Gastrocnemius medialis (tissue), 4 donors: ENCODE measurements at regions of chr6 and their contacts with region 1.

Region 1: DNA sequence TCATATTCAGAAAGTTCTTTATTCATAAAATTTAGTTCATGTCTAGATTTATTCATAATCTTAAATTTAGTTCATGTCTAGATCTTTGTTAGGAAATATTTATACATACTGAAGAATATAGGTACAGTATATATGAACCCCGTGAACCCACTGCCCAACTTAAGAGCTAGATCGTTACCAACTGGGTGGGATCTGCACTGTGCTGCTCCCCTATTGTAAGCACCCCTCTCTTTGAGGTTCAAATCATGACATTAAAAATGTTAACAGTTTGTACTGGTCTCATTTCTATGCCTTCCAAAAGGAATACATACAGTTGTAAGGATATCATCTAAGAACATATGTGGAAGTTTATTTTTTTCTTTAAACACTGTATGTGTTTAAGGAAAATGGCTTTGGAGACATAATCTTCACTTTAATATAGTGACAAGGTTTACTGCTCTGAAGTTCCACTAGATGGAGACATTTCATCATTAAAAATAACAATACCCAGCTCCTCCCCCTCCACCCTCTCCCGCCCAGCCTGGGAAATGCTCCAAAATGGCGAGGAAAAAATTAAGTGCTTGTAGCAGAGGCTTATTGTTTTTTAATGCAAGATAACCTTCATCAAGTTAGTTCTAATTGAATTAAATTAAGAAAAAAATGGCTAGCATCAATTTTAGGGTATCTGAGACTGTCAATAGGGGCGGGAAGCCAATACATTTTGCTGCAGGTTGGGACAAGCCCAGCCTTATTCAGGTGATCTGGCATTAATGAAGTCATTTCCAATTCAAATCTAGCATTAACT is 104.1 kb upstream of the TRAF3IP2 start:
- DNase-seq: peak; percentile 52 to 67
- ATAC-seq: peak; percentile 84 to 90
- H3K4me3 ChIP-seq: peak overlapping the region; percentile 30 to 48 (median 41)
- H3K27ac ChIP-seq: peak overlapping the region in 3 of 4 donors; percentile 57 to 67 (median 60)
- H3K4me1 ChIP-seq: peaks cover 28 to 31% of the 10 kb centered on the region in 2 donors
- H3K27me3 ChIP-seq: no peaks in the 10 kb centered on the region
- CTCF ChIP-seq: peak; percentile 73 to 83 (median 80)
- POLR2A ChIP-seq: no peak

Region 2: DNA sequence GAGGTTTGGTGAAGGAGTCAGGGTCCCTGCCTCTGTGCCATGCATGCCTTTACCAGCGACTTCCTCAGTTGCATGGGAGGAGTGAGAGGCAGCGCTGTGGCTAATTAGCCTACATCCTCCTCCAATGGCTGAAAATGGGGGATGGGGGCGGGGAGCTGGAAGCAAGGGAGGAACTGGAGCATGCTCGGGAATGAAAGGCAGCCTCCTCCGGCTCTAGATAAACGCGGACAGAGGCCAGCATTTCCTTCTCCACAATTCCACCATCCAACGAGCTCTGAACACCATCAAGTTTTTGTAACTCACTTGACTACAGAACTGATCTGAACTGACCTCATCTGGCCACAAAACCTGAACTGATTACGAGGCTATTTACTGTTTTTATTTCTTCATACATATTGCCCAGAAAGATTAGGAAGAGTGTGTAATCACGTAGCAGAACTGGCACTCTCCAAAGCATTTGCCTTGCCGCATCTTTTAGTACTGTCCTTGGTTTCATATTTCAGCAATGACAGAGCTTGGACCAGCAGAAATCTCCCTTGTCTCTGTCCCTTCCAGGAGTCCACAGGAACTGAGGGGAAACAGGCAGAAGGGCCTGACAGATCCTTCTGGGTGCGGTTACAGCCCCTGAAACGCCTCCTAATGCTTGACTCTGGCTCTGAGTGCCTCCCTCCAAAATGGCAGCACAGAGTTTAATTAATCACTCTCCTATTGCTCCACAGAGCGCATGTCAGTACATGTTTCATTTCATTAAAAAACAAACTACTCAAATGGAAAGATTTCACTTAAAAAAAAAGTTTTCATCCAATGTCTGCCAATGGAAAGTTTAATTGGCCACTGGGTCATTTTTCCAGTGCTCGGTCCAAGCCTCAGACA is 45.9 kb before region 1 on chr6:
- in situ Hi-C with region 1: no loop called
- intact Hi-C with region 1: no loop called
- DNase-seq: peak; percentile 56 to 77
- ATAC-seq: peak; percentile 63 to 64
- H3K4me3 ChIP-seq: peak overlapping the region; percentile 12 to 52 (median 22)
- H3K27ac ChIP-seq: peak overlapping the region; percentile 88 to 96 (median 95)
- H3K4me1 ChIP-seq: peaks cover 78 to 83% of the 10 kb centered on the region in 2 donors
- H3K27me3 ChIP-seq: no peaks in the 10 kb centered on the region
- CTCF ChIP-seq: peak in 1 of 5 experiments; percentile 6
- POLR2A ChIP-seq: peak; percentile 11 to 59

Region 3: DNA sequence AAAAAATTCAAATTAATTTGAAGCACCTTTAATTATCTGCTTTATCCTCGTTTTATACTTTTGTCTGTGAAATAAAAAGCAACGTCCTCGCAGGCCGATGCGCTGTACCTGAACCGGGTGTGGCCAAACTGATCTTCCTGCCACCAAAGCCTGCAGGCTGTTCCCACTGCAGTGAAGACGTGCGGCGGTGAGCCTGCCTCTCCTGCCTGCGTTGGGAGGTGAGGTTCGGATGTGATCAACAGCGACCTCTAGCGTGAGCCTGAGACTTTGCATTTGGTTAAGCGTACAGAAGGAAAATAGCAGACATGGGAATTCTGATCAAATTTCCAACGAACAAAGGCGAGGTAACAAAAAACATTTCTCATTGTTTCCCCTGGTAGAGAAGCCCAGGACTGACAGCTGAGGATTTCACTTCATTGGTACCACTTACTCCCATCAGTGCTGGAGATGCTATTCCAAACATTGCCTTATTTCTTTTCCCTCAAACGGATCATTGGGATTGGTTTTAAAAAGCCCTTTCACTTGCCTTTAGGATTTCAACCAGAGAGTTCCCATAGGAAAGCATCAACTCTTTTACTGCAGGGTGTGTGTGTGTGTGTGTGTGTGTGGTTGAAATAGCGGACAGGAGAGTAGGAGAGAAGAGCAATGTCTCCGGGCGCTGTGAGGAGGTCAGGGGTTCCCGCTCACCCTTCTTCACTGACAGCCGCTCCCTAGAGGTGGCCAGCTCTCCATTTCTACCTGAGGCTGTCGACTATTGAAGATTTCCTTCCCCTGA is 287.5 kb after region 1 on chr6:
- in situ Hi-C with region 1: loop called (anchors 5 kb)
- intact Hi-C with region 1: loop called (anchors 1 kb)
- DNase-seq: peak; percentile 76 to 79
- ATAC-seq: peak; percentile 70 to 92
- H3K4me3 ChIP-seq: peak overlapping the region; percentile 8 to 39 (median 34)
- H3K27ac ChIP-seq: peak overlapping the region; percentile 21 to 64 (median 54)
- H3K4me1 ChIP-seq: peaks cover 0 to 8% of the 10 kb centered on the region in 2 donors
- H3K27me3 ChIP-seq: no peaks in the 10 kb centered on the region
- CTCF ChIP-seq: peak; percentile 84 to 93 (median 89)
- POLR2A ChIP-seq: no peak

Region 4: GRCh38 chr6:112043032-112044007 is 333.5 kb after region 1 on chr6:
- in situ Hi-C with region 1: loop called in 2 of 4 experiments (anchors 5 to 10 kb)
- intact Hi-C with region 1: loop called (anchors 1 kb)
- DNase-seq: peak; percentile 53 to 68
- ATAC-seq: peak; percentile 86
- H3K4me3 ChIP-seq: peak overlapping the region; percentile 64 to 85 (median 67)
- H3K27ac ChIP-seq: peak overlapping the region; percentile 44 to 73 (median 66)
- H3K4me1 ChIP-seq: peaks cover 1 to 8% of the 10 kb centered on the region in 2 donors
- H3K27me3 ChIP-seq: no peaks in the 10 kb centered on the region
- CTCF ChIP-seq: peak; percentile 77 to 94 (median 87)
- POLR2A ChIP-seq: no peak